Activated B cell treated with CpG ODN at 0.5 μM for 24 hours (primary cell): ENCODE measurements at regions of chr1 and their contacts with region 1.

Region 1: DNA sequence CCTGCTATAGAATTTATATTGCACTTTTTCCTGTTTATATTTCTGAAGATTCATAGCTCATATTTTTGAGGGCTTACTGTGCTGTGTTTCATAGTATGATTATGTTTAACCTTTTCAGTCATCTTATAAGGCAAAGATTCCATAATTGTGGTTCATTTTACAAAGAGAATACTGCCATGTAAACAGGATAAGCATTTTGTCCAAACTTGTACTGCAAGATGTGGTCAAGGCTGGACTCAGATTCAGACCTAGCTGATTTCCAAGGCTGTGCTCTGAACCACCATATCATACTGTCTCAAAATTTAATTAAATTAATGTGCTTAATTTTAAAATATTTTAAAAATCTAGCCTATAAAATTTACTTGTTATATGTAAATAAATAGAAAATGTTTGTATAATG is 31.4 kb downstream of the STXBP3 start:
- DNase-seq: no peak
- ATAC-seq: no peak
- H3K4me3 Mint-ChIP-seq: no peak overlapping the region
- H3K27ac Mint-ChIP-seq: no peak overlapping the region
- H3K4me1 Mint-ChIP-seq: no peaks in the 10 kb centered on the region
- H3K27me3 Mint-ChIP-seq: no peaks in the 10 kb centered on the region
- CTCF ChIP-seq: no peak

Region 2: GRCh38 chr1:108791790-108792189 is 14.0 kb after region 1 on chr1:
- CTCF ChIA-PET with region 1: no interaction called
- POLR2A ChIA-PET with region 1: no interaction called
- intact Hi-C with region 1: loop called (anchors 2 kb)
- DNase-seq: no peak
- ATAC-seq: no peak
- H3K4me3 Mint-ChIP-seq: no peak overlapping the region
- H3K27ac Mint-ChIP-seq: no peak overlapping the region
- H3K4me1 Mint-ChIP-seq: no peaks in the 10 kb centered on the region
- H3K27me3 Mint-ChIP-seq: no peaks in the 10 kb centered on the region
- CTCF ChIP-seq: no peak

Region 3: DNA sequence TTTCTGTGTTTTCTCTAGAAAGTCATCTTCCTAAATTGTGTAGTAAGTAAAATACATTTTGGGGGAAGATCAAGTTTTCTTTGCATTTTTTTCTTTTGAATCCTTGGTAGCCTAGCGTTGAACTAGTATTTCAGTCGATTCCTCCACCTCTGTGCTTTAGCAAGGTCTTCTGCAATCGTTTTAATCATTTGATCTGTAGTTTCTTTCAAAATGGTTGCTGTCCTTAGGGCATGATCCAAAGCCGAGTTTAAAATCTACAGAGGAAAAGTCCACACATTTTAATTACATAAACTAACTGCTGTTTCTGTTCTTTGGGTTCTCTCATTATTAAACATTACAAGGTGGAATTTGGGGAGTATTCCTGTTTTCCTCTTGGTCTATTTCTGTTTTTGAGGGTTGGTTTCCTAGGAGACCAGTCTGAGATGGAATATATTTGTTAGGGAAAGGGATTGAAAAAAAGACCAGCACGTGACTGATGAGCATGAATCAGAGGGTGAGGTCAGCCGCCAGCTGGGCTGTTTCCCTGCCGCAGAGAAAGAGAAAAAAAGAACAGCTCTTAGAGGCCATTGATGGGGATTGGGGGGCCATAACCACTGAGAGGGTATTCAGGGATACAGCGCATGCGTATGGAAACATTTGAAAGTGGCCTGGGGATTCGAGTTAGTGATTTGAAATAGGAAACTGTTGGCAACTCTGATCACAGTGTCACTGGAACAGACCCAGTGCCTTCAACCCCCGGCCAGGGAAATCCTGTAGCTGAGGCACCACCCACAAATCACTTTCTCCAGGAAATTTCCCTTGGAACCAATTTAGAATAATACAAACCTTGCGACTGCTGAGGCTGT is 38.4 kb after region 1 on chr1:
- CTCF ChIA-PET with region 1: no interaction called
- POLR2A ChIA-PET with region 1: no interaction called
- intact Hi-C with region 1: no loop called
- DNase-seq: no peak
- ATAC-seq: no peak
- H3K4me3 Mint-ChIP-seq: no peak overlapping the region
- H3K27ac Mint-ChIP-seq: no peak overlapping the region
- H3K4me1 Mint-ChIP-seq: no peaks in the 10 kb centered on the region
- H3K27me3 Mint-ChIP-seq: peaks cover 3% of the 10 kb centered on the region
- CTCF ChIP-seq: no peak